ENCODE measurements at regions of chr2 and their contacts with region 1.

Region 1: GRCh38 chr2:3959372-3959771 is 256.0 kb downstream of the DCDC2C start:
- DNase-seq: peak; percentile 75
- H3K4me3 ChIP-seq: no peak overlapping the region; a peak in 1 of 4 replicates
- H3K27ac ChIP-seq: no peak overlapping the region
- H3K4me1 ChIP-seq: peaks cover 0 to 3% of the 10 kb centered on the region in 2 experiments; a peak in 1 of 4 replicates
- H3K27me3 ChIP-seq: no peaks in the 10 kb centered on the region
- CTCF ChIP-seq: peak; percentile 79
- EP300 ChIP-seq: no peak
- RAD21 ChIP-seq: peak; percentile 94

Region 2: DNA sequence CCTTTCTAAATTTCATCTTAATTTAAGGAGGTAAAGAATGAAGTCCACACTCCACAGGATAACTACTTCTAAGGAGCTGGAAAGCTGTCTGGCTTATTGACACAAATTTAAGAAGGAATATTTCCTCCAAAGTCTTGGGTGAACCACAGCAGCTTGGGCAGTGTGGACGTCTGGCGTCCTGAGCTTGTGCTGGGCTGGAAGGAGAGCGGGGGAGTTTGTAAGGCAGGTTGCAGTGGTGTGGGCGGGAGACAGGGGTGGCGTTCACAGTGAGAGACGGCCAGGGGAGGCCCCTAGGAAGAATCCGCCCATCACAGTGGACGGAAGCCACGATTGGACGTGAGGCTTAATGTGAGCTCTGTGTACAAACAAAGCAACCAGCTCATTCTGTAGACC is 465.8 kb before region 1 on chr2:
- CTCF ChIA-PET with region 1: no interaction called
- POLR2A ChIA-PET with region 1: no interaction called
- DNase-seq: peak; percentile 87
- H3K4me3 ChIP-seq: no peak overlapping the region
- H3K27ac ChIP-seq: no peak overlapping the region
- H3K4me1 ChIP-seq: peaks cover 0 to 9% of the 10 kb centered on the region in 2 experiments; a peak in 1 of 4 replicates
- H3K27me3 ChIP-seq: no peaks in the 10 kb centered on the region
- CTCF ChIP-seq: no peak
- EP300 ChIP-seq: no peak
- RAD21 ChIP-seq: no peak

Region 3: DNA sequence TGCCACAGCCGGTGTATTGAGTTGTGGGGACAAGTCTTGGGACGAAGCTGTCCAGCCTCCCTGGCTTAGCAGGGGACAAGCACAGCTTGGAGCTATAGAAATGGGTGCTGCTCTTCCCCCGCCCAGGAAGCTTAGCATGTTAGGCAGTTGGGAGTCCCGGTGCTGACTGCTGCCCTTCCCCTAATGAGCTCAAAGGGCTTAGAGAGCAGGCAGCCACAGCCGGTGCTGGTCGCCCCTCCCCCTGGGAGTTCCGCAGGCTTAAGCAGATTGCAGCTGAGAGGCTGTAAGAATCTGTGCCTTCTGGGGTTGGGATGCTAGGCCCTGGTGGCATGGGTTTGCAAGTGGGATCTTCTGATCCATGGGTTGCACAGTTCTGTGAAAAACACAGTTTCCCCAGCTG is 18.7 kb before region 1 on chr2:
- CTCF ChIA-PET with region 1: interaction called, 57 read pairs
- POLR2A ChIA-PET with region 1: no interaction called
- DNase-seq: no peak
- H3K4me3 ChIP-seq: no peak overlapping the region
- H3K27ac ChIP-seq: no peak overlapping the region
- H3K4me1 ChIP-seq: no peaks in the 10 kb centered on the region
- H3K27me3 ChIP-seq: no peaks in the 10 kb centered on the region
- CTCF ChIP-seq: no peak
- EP300 ChIP-seq: no peak
- RAD21 ChIP-seq: no peak

Region 4: GRCh38 chr2:3974765-3975164 is 15.4 kb after region 1 on chr2:
- CTCF ChIA-PET with region 1: interaction called, 12 read pairs
- POLR2A ChIA-PET with region 1: no interaction called
- DNase-seq: no peak
- H3K4me3 ChIP-seq: no peak overlapping the region
- H3K27ac ChIP-seq: no peak overlapping the region
- H3K4me1 ChIP-seq: no peaks in the 10 kb centered on the region
- H3K27me3 ChIP-seq: no peaks in the 10 kb centered on the region
- CTCF ChIP-seq: no peak
- EP300 ChIP-seq: no peak
- RAD21 ChIP-seq: no peak

Region 5: DNA sequence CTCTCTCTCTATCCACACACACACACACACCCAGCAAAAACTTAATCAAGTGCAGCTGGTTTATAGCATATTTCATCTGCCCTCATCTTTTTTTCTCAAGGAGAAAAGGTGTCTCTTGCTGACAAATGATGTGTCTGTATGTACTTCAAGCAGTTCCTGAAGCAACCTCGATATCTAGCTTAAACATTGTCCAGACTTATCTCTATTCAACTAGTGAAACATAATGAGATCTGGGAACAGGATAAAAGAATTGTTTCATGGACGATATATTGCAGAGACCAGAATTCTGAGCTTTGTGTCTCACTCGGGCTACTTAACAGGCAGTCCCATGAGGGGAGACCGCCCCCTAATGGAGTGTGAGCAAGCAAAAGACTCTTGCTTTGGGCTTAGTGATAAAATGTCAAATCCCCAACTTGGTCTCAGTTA is 803.6 kb after region 1 on chr2:
- CTCF ChIA-PET with region 1: interaction called, 23 read pairs
- POLR2A ChIA-PET with region 1: no interaction called
- DNase-seq: peak; percentile 62
- H3K4me3 ChIP-seq: no peak overlapping the region; a peak in 1 of 4 replicates
- H3K27ac ChIP-seq: no peak overlapping the region
- H3K4me1 ChIP-seq: peaks cover 2 to 6% of the 10 kb centered on the region in 2 experiments; a peak in 3 of 4 replicates
- H3K27me3 ChIP-seq: no peaks in the 10 kb centered on the region
- CTCF ChIP-seq: no peak
- EP300 ChIP-seq: no peak
- RAD21 ChIP-seq: peak; percentile 76

Measured in SK-N-SH (cell line).